ENCODE measurements at regions of chr15 and their contacts with region 1.

Region 1: DNA sequence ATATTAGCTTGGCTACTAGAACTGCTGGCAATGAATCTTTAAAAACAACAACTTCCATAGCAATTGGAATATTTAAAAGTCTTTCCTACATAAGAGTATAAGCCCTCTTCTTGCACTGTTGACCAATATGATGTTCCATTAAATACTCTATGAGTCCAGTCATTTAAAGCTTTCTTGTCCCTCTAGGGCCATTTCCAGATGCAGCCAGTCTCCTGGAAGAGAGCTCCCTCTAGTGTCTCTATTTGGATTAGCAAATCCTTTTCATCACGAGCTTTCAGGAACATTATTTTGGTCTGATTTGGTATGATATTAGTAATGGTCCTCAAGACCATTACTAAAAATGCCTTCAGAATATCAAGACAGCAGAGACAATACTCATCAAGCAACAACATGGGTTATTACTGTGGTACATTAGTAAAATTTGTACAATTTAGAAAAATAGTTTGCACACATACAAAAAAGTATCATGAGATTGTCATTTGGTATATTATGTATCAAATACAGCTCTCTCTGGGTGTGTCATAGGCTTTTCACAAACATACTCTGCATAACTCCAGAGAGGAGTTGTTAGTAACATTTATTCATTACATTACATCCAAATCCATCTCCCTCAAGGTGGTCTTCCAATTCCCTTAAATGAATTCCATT is 101.3 kb downstream of the DPH6 start:
- DNase-seq: no peak
- H3K4me3 ChIP-seq: no peak overlapping the region
- H3K27ac ChIP-seq: no peak overlapping the region
- H3K4me1 ChIP-seq: peaks cover 0 to 6% (median 5%) of the 10 kb centered on the region in 4 donors
- H3K27me3 ChIP-seq: no peaks in the 10 kb centered on the region
- CTCF ChIP-seq: peak; percentile 62 to 79 (median 75)
- EP300 ChIP-seq: no peak
- POLR2A ChIP-seq: no peak

Region 2: GRCh38 chr15:35078221-35078915 is 366.3 kb before region 1 on chr15:
- intact Hi-C with region 1: loop called (anchors 1 kb)
- DNase-seq: no peak
- H3K4me3 ChIP-seq: no peak overlapping the region
- H3K27ac ChIP-seq: no peak overlapping the region
- H3K4me1 ChIP-seq: peaks cover 0 to 23% (median 21%) of the 10 kb centered on the region in 4 donors
- H3K27me3 ChIP-seq: no peaks in the 10 kb centered on the region
- CTCF ChIP-seq: peak; percentile 82 to 85 (median 84)
- EP300 ChIP-seq: no peak
- POLR2A ChIP-seq: no peak

Measured in esophagus muscularis mucosa (tissue), 4 donors.